ENCODE measurements at regions of chr6 and their contacts with region 1.

Region 1: DNA sequence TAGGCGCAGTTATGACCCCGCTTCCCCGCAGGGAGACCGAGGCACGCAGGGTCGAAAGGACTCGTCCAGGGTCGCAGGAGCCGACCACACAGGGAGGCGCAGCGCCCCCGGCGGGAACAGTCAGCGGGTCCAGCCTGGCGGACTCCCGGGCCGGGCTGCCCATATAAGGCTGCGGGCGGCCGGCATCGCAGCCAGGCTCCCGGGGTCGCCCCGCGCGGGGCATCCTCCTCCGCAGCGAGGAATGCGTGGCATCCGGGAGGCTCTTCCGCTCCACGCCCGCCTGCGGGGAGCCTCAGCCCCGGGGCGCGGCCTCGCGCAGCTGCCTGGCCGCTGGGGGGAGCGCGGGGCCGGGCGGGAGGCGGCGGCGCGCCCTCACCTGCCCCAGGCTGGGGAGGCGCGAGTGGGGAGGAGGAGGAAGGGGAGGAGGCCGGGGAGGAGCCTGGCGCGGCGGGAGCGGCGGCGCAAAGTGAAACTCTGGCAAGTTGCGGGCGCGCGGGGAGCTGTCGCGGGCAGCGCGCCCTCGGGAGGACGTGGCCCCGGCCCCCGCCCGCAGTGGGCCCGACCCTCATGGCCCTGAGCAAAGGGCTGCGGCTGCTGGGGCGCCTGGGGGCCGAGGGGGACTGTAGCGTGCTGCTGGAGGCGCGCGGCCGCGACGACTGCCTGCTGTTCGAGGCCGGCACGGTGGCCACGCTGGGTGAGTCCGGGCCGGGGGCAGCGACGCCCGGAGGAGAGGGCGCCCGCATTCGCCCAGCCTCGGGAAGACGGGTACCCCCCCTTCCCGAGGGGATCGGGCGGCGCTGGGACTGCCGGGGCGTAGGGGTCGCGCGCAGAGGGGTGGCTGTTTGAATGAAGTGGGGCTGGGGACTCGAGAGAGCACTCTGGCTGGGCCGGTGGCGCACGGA is at the start of gene SYNJ2:
- DNase-seq: peak; percentile 86 to 89 (median 87)
- H3K4me3 ChIP-seq: peak within 1 kb of the TSS; percentile 76 to 88
- H3K4me3 Mint-ChIP-seq: peak within 1 kb of the TSS; percentile 88 to 94 (median 92)
- H3K27ac ChIP-seq: peak within 1 kb of the TSS; percentile 71
- H3K27ac Mint-ChIP-seq: peak within 1 kb of the TSS; percentile 85 to 93 (median 90)
- H3K4me1 ChIP-seq: peaks cover 44% of the 10 kb centered on the region
- H3K4me1 Mint-ChIP-seq: peaks cover 24 to 53% (median 39%) of the 10 kb centered on the region in 4 donors
- H3K27me3 ChIP-seq: no peaks in the 10 kb centered on the region
- H3K27me3 Mint-ChIP-seq: no peaks in the 10 kb centered on the region
- total RNA-seq, gene SYNJ2: 17.2 to 17.4 TPM

Region 2: GRCh38 chr6:158009114-158009891 is 27.7 kb after region 1 on chr6:
- CTCF ChIA-PET with region 1: interaction called, 5 read pairs
- POLR2A ChIA-PET with region 1: no interaction called
- intact Hi-C with region 1: loop called (anchors 2 kb)
- DNase-seq: peak; percentile 37 to 67 (median 39)
- H3K4me3 ChIP-seq: peak overlapping the region; percentile 46 to 58
- H3K4me3 Mint-ChIP-seq: peak overlapping the region; percentile 70 to 94 (median 83)
- H3K27ac ChIP-seq: peak overlapping the region; percentile 36
- H3K27ac Mint-ChIP-seq: peak overlapping the region; percentile 79 to 98 (median 96)
- H3K4me1 ChIP-seq: peaks cover 54% of the 10 kb centered on the region
- H3K4me1 Mint-ChIP-seq: peaks cover 64 to 90% (median 78%) of the 10 kb centered on the region in 4 donors
- H3K27me3 ChIP-seq: no peaks in the 10 kb centered on the region
- H3K27me3 Mint-ChIP-seq: no peaks in the 10 kb centered on the region

Region 3: GRCh38 chr6:158168040-158168289 is 186.3 kb after region 1 on chr6 and contains the start of gene SERAC1:
- CTCF ChIA-PET with region 1: no interaction called
- POLR2A ChIA-PET with region 1: no interaction called
- intact Hi-C with region 1: loop called (anchors 5 kb)
- DNase-seq: no peak
- H3K4me3 ChIP-seq: peak within 1 kb of the TSS; percentile 84 to 99
- H3K4me3 Mint-ChIP-seq: peak within 1 kb of the TSS; percentile 95 to 99 (median 96)
- H3K27ac ChIP-seq: peak within 1 kb of the TSS; percentile 88
- H3K27ac Mint-ChIP-seq: peak within 1 kb of the TSS; percentile 97 to 100 (median 99)
- H3K4me1 ChIP-seq: peaks cover 17% of the 10 kb centered on the region
- H3K4me1 Mint-ChIP-seq: peaks cover 7 to 27% (median 17%) of the 10 kb centered on the region in 4 donors
- H3K27me3 ChIP-seq: no peaks in the 10 kb centered on the region
- H3K27me3 Mint-ChIP-seq: no peaks in the 10 kb centered on the region
- total RNA-seq, gene SERAC1: 4.9 to 5.5 TPM